ENCODE measurements at regions of chr7 and their contacts with region 1.

Region 1: GRCh38 chr7:44858161-44858560 is 10.3 kb upstream of the H2AZ2 start:
- DNase-seq: no peak
- ATAC-seq: no peak
- H3K4me3 ChIP-seq: no peak overlapping the region
- H3K27ac ChIP-seq: no peak overlapping the region
- H3K4me1 ChIP-seq: no peaks in the 10 kb centered on the region
- H3K27me3 ChIP-seq: no peaks in the 10 kb centered on the region
- CTCF ChIP-seq: peak in 3 of 7 experiments; percentile 1 to 22 (median 17)
- POLR2A ChIP-seq: no peak

Region 2: DNA sequence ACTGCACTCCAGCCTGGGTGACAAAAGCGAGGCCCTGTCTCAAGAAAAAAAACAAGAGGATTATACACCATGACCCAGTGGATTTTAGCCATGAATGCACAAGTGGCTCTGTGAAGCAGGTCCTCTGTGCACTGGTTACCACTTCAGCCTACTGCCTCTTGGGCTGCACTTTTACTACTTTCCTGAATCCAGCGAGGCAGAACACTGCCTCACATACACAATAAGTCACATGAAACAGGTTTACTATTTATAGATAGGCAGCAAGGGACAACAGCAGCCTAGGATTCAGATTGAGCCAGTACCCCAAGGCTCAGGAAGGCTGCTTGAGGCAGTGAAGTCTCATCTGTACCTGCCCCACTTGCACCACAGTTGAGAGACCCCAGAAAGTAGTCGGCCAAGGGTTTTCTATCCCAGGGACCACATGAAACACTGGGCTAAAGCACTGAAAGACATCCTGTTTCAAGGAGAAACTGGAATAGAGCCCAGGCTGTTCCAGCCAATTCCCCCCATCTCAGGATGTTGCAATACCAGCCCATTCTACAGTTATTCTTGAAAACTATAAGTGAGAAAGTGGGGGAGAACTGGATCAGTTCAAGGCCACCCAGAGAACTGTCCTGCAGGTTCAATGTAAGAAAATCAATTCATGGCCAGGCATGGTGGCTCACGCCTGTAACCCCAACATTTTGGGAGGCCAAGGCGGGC is 262.1 kb before region 1 on chr7:
- intact Hi-C with region 1: loop called (anchors 10 kb)
- DNase-seq: no peak
- ATAC-seq: no peak
- H3K4me3 ChIP-seq: no peak overlapping the region
- H3K27ac ChIP-seq: no peak overlapping the region
- H3K4me1 ChIP-seq: no peaks in the 10 kb centered on the region
- H3K27me3 ChIP-seq: no peaks in the 10 kb centered on the region
- CTCF ChIP-seq: no peak
- POLR2A ChIP-seq: no peak

Region 3: DNA sequence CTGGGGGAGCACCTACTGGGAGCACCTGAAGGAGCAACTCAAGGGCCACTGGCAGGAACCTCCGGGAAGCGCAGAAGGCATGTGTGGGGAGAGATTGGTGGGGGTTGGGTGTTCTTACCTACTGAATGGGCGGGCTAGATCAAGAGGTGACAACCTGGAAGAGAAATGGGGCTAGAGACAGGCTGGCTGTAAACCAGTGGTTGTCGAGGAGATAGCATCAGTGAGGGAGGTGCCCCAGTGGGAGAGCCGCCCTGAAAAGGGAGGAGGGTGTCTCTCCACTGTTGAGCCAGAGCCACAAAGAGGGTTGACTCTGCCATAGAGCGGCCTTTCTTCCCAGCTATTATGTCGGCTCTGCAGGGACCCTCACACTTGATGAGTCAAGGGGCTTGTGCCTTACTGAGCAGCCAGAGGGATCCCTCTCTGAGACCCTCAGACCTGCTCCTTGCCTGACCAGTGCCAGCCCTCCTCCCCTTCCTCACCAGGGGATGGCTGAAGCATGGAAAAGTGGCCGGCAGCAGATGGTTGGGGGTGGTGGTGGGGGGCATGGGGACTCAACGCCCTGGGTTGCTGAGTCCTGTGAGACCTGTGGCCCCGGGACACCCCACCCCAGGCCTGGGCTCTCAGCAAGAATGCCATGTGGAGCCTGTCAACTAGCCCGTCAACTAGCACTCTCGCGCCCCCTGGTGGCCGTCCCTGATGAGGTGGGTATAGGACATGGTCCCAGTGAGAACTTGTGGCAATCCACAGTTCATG is 63.6 kb after region 1 on chr7:
- intact Hi-C with region 1: loop called (anchors 5 kb)
- DNase-seq: peak; percentile 90 to 95 (median 91)
- ATAC-seq: peak; percentile 97
- H3K4me3 ChIP-seq: no peak overlapping the region
- H3K27ac ChIP-seq: no peak overlapping the region
- H3K4me1 ChIP-seq: peaks cover 5% of the 10 kb centered on the region
- H3K27me3 ChIP-seq: no peaks in the 10 kb centered on the region
- CTCF ChIP-seq: peak; percentile 76 to 88 (median 82)
- POLR2A ChIP-seq: no peak

Region 4: GRCh38 chr7:44944821-44945220 is 86.7 kb after region 1 on chr7:
- intact Hi-C with region 1: no loop called
- DNase-seq: no peak
- ATAC-seq: no peak
- H3K4me3 ChIP-seq: no peak overlapping the region
- H3K27ac ChIP-seq: no peak overlapping the region
- H3K4me1 ChIP-seq: no peaks in the 10 kb centered on the region
- H3K27me3 ChIP-seq: no peaks in the 10 kb centered on the region
- CTCF ChIP-seq: no peak
- POLR2A ChIP-seq: no peak

Region 5: DNA sequence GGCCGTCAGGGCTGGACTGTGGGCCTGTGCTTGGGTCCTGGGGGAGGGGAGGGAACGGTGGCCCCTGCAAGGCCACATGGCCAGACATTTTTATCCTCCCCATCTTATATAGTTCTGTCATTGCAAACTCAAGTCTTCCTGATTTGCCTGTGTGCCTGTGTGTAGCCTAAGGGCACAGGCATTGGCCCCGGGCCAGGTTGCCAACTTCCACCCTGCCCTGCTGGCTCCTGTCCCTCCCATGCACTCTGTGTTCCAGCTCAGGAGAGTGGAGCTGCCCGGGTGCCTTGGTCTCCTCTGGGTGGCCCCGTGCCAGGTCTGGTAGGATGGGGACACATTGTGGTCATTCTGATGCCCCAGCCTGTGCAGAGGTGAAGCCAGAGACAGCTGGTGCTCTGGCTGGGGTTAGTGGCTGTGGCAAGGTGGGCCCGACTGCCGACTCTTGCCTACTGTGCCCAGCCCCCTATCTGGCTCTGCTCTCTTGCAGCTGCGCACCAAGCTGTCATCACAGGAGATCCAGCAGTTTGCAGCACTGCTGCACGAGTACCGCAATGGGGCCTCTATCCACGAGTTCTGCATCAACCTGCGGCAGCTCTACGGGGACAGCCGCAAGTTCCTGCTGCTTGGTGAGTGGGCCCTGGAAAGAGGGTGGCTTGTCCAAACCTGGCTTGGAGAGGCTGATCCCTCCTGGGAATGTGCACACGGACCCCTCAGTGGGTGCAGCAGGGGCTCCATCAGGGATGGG is 215.8 kb after region 1 on chr7:
- intact Hi-C with region 1: no loop called
- DNase-seq: no peak
- ATAC-seq: no peak
- H3K4me3 ChIP-seq: no peak overlapping the region
- H3K27ac ChIP-seq: no peak overlapping the region
- H3K4me1 ChIP-seq: no peaks in the 10 kb centered on the region
- H3K27me3 ChIP-seq: no peaks in the 10 kb centered on the region
- CTCF ChIP-seq: no peak
- POLR2A ChIP-seq: no peak

Region 6: GRCh38 chr7:45136106-45137060 is 278.2 kb after region 1 on chr7:
- intact Hi-C with region 1: loop called (anchors 10 kb)
- DNase-seq: peak; percentile 52 to 63 (median 60)
- ATAC-seq: peak; percentile 88
- H3K4me3 ChIP-seq: no peak overlapping the region
- H3K27ac ChIP-seq: no peak overlapping the region
- H3K4me1 ChIP-seq: no peaks in the 10 kb centered on the region
- H3K27me3 ChIP-seq: no peaks in the 10 kb centered on the region
- CTCF ChIP-seq: peak; percentile 66 to 93 (median 85)
- POLR2A ChIP-seq: no peak

Measured in body of pancreas (tissue), 4 donors.